Breast epithelium (tissue), 4 donors: ENCODE measurements at regions of chr1 and their contacts with region 1.

Region 1: DNA sequence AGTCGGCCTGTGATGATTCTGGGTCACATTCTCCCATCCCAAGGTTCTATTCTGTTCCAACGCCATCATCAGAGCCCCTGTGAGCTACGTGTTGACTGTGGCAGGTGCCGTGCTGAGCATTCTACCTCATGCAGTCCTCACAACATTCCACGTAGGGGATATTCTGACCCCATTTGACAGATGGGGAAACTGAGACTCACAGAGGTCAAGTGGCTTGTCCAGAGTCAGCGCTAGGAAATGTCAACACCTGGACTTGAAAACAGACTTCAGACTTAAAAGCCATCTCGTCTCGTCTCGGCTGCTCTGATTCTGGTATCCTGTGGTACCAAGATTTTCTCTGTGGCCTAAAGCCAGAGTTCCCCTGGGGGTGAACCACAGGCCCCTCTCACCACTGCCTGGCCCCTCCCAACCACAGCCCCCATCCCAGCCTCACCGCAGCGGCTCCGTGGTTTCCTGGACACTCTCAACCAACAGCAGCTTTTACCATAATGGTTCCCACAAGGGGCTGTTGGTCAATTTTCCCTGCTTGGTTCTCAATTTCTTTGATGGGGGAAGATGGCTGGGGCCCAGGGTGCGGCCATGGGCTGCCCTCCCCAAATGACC is 39.6 kb downstream of the SDC3 start:
- DNase-seq: no peak
- H3K4me3 ChIP-seq: no peak overlapping the region
- H3K27ac ChIP-seq: no peak overlapping the region
- H3K4me1 ChIP-seq: no peaks in the 10 kb centered on the region
- H3K27me3 ChIP-seq: no peaks in the 10 kb centered on the region
- CTCF ChIP-seq: no peak
- POLR2A ChIP-seq: no peak

Region 2: DNA sequence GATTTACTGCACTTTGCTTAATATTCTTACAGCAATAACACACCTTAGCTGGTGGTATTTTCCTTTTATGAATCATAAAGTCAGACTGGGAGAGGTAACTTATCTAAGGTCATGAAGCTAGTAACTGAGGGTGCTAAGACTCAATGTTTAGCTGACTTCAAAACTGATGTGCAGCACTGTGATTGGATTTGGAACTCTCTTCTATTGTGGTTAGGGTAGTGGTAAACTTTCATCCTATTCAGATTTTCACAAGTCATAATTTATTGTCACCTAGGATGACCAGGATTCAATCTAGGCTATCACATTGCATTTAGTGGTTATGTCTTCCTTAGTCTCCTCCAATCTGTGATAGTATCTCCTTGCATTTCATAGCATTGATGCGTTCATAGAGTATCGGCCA is 1935.7 kb before region 1 on chr1:
- intact Hi-C with region 1: loop called (anchors 10 kb)
- DNase-seq: no peak
- H3K4me3 ChIP-seq: no peak overlapping the region
- H3K27ac ChIP-seq: no peak overlapping the region
- H3K4me1 ChIP-seq: no peaks in the 10 kb centered on the region
- H3K27me3 ChIP-seq: no peaks in the 10 kb centered on the region
- CTCF ChIP-seq: no peak
- POLR2A ChIP-seq: no peak